ENCODE measurements at regions of chr12 and their contacts with region 1.

Region 1: GRCh38 chr12:94875525-94875924 is 128.0 kb downstream of the NDUFA12 start:
- H3K4me3 ChIP-seq: no peak overlapping the region
- H3K27ac ChIP-seq: no peak overlapping the region
- H3K4me1 ChIP-seq: peaks cover 10% of the 10 kb centered on the region
- CTCF ChIP-seq: no peak; the same call in 1 of the 2 replicates

Region 2: GRCh38 chr12:94545935-94546771 is 329.4 kb before region 1 on chr12:
- CTCF ChIA-PET with region 1: interaction called, 15 read pairs
- POLR2A ChIA-PET with region 1: no interaction called
- H3K4me3 ChIP-seq: no peak overlapping the region
- H3K27ac ChIP-seq: no peak overlapping the region
- H3K4me1 ChIP-seq: no peaks in the 10 kb centered on the region; the same call in 1 of the 2 replicates
- CTCF ChIP-seq: peak; percentile 87

Region 3: GRCh38 chr12:94603434-94604365 is 271.8 kb before region 1 on chr12:
- CTCF ChIA-PET with region 1: interaction called, 11 read pairs
- POLR2A ChIA-PET with region 1: no interaction called
- H3K4me3 ChIP-seq: no peak overlapping the region
- H3K27ac ChIP-seq: no peak overlapping the region
- H3K4me1 ChIP-seq: peaks cover 3% of the 10 kb centered on the region; the same call in 1 of the 2 replicates
- CTCF ChIP-seq: no peak

Region 4: GRCh38 chr12:94621664-94622359 is 253.7 kb before region 1 on chr12:
- CTCF ChIA-PET with region 1: no interaction called
- POLR2A ChIA-PET with region 1: no interaction called
- H3K4me3 ChIP-seq: no peak overlapping the region
- H3K27ac ChIP-seq: no peak overlapping the region
- H3K4me1 ChIP-seq: peaks cover 26% of the 10 kb centered on the region
- CTCF ChIP-seq: no peak

Region 5: GRCh38 chr12:94762259-94762942 is 113.1 kb before region 1 on chr12:
- CTCF ChIA-PET with region 1: interaction called, 11 read pairs
- POLR2A ChIA-PET with region 1: no interaction called
- H3K4me3 ChIP-seq: no peak overlapping the region
- H3K27ac ChIP-seq: no peak overlapping the region
- H3K4me1 ChIP-seq: no peaks in the 10 kb centered on the region
- CTCF ChIP-seq: no peak

Region 6: GRCh38 chr12:94909663-94910062 is 34.1 kb after region 1 on chr12:
- CTCF ChIA-PET with region 1: no interaction called
- POLR2A ChIA-PET with region 1: no interaction called
- H3K4me3 ChIP-seq: no peak overlapping the region
- H3K27ac ChIP-seq: no peak overlapping the region
- H3K4me1 ChIP-seq: no peaks in the 10 kb centered on the region
- CTCF ChIP-seq: no peak

Region 7: DNA sequence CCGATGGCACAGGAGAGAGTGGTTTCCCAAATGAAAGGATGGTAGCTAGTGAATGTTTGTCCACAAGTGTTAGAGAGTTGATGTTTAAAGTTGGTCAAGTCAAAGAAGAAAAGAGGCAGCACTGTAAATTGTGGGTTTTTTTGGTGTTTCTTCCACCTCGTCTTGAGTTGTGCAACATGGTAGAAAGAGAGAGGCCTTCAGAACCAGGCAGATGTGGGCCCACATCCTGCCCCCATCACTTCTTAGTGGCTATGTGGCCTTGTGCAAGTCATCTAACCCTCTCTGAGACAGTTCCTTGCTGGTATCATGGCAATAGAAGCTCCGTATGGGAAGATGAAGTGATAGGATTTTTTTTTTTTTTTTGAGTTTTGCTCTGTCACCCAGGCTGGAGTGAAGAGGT is 67.1 kb after region 1 on chr12:
- CTCF ChIA-PET with region 1: no interaction called
- POLR2A ChIA-PET with region 1: no interaction called
- H3K4me3 ChIP-seq: no peak overlapping the region
- H3K27ac ChIP-seq: no peak overlapping the region
- H3K4me1 ChIP-seq: peaks cover 12% of the 10 kb centered on the region; the same call in 1 of the 2 replicates
- CTCF ChIP-seq: no peak

Measured in HEK293 (cell line).